ENCODE measurements at regions of chr12 and their contacts with region 1.

Region 1: GRCh38 chr12:108193917-108194316 is 64.8 kb downstream of the WSCD2 start:
- DNase-seq: peak in 1 of 2 donors; percentile 8
- ATAC-seq: no peak
- H3K4me3 ChIP-seq: no peak overlapping the region
- H3K27ac ChIP-seq: no peak overlapping the region
- H3K4me1 ChIP-seq: peaks cover 0 to 6% (median 0%) of the 10 kb centered on the region in 9 donors
- H3K27me3 ChIP-seq: no peaks in the 10 kb centered on the region
- CTCF ChIP-seq: peak; percentile 52 to 76 (median 70)

Region 2: DNA sequence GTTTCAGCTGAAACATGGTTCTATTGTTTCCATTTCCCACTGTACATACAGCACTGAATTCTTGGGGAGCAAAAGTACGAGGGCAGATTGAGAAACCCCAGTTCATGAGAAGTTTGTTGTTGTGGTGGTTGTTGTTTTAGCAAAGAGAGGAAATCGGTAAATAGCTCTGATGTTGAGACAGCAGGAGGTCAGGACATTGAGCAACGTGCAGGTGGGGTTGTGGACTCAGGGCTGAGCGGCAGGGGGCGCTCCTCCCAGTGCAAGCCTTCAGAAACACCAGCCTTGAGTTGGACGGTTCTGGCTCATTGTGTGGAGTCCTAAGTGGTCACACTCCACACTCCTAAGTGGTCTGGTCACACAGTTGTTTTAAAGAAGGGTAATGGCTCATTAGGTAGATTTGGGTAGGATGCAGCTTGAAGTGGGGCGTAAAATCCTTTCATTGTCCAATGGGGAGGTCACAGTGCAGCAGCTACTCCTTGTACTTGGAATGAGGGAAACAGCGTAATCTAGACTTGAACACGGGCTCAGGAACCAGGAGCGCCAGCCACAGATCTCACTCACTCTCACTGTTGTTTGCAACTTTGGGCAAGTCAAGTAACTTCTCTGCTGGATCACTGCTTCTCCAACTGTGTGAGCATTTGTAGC is 522.8 kb before region 1 on chr12:
- intact Hi-C with region 1: loop called in 2 of 10 experiments (anchors 10 kb)
- DNase-seq: no peak
- ATAC-seq: no peak
- H3K4me3 ChIP-seq: no peak overlapping the region
- H3K27ac ChIP-seq: no peak overlapping the region
- H3K4me1 ChIP-seq: no peaks in the 10 kb centered on the region
- H3K27me3 ChIP-seq: peaks cover 0 to 52% (median 36%) of the 10 kb centered on the region in 7 donors
- CTCF ChIP-seq: peak in 7 of 9 donors; percentile 40 to 72 (median 56)

Region 3: GRCh38 chr12:107917912-107918800 is 275.8 kb before region 1 on chr12:
- intact Hi-C with region 1: loop called in 4 of 10 experiments (anchors 5 kb)
- DNase-seq: no peak
- ATAC-seq: peak in 3 of 8 donors; percentile 44 to 55 (median 51)
- H3K4me3 ChIP-seq: no peak overlapping the region
- H3K27ac ChIP-seq: no peak overlapping the region
- H3K4me1 ChIP-seq: no peaks in the 10 kb centered on the region
- H3K27me3 ChIP-seq: peaks cover 9 to 82% (median 43%) of the 10 kb centered on the region in 7 donors
- CTCF ChIP-seq: peak; percentile 21 to 64 (median 55)

Region 4: DNA sequence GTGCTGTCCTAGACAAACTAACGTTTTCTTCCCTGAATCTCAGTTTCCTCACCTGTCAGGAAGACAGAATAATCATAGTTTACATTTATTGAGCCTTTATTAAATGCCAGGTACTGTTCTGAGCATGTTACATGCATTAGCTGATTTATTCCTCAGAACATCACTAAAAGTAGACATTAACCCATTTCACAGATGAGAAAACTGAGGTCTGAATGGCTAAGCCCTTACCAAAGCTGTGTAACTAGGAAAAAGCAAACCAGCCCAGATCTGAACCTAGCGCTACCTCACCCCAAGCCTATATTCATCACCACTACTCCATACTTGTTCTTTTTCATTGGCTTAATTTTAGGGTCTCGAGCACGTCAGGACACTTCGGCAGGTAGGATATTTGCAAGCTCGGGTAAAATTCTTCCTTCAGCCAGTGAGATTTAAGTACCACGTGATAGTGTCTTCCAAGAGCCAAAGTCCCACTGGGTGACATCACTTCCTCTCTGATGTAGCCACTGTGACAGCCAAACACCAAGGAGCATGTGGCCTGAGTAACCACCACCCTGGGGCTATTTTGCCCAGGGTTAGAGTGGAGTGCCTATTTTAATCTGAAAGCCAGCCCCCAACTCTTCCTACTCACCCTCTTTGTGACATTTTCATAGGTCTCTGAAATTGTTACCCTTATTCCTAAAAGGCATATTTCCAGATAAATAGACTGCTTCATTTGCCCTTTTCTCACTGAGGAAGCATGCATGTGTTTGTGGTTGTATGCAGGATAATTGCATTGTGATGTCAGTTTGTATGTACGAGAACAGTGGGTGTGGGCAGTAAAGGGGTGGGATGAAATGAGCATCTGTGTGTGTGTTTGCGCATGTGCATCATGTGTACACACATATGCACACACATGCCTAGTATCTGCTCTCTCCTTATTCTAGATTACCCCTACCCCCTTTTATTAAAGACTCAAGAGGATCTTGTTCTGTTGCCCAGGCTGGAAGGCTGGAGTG is 127.0 kb before region 1 on chr12:
- intact Hi-C with region 1: no loop called
- DNase-seq: no peak
- ATAC-seq: no peak
- H3K4me3 ChIP-seq: no peak overlapping the region
- H3K27ac ChIP-seq: no peak overlapping the region
- H3K4me1 ChIP-seq: no peaks in the 10 kb centered on the region
- H3K27me3 ChIP-seq: peaks cover 0 to 60% (median 14%) of the 10 kb centered on the region in 7 donors
- CTCF ChIP-seq: no peak

Region 5: DNA sequence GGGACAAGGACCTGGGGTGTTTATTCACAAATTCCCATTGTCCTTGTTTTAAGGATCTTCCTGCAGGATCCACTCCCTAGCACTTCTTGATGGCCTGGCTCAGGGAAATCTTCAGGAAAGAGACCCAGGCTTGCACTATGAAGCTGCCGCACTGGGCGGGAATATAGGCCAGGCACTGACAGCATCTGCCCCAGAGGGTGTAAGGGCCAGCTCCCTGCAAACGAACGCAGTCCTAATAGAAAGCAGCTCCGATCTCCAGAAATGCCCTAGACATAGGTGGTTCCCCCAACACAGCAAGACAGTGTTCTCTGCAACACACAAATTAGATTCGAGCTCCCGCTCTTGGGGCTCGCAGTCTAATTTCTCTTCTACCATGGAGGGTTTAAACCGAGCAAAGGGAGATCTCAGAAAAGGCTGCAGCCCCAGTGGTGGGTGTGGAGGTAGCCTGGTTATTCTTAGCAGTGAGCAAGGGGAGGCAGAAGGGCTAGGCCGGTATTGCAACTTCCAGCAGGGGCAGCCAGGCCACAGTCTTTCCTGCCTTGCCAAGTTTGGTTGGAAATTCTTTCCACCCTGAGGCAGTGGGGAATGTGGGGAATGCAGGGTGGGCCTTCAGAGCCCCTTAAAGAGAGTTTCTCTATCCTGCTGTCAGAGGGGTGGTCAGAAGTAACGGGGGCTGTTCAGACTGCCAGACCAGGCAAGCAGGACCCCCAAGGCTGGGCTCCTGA is 80.9 kb before region 1 on chr12:
- intact Hi-C with region 1: loop called in 1 of 10 experiments (anchors 5 kb)
- DNase-seq: no peak
- ATAC-seq: peak; percentile 55 to 85 (median 74)
- H3K4me3 ChIP-seq: no peak overlapping the region
- H3K27ac ChIP-seq: peak overlapping the region in 1 of 10 donors; percentile 13
- H3K4me1 ChIP-seq: peaks cover 0 to 11% (median 3%) of the 10 kb centered on the region in 9 donors
- H3K27me3 ChIP-seq: peaks cover 0 to 20% (median 0%) of the 10 kb centered on the region in 7 donors
- CTCF ChIP-seq: peak in 1 of 9 donors; percentile 19

Region 6: GRCh38 chr12:108133482-108133881 is 60.4 kb before region 1 on chr12:
- intact Hi-C with region 1: loop called in 5 of 10 experiments (anchors 2 to 5 kb)
- DNase-seq: peak in 1 of 2 donors; percentile 53
- ATAC-seq: peak in 6 of 8 donors; percentile 63 to 92 (median 81)
- H3K4me3 ChIP-seq: no peak overlapping the region
- H3K27ac ChIP-seq: no peak overlapping the region
- H3K4me1 ChIP-seq: peaks cover 0 to 13% (median 8%) of the 10 kb centered on the region in 9 donors
- H3K27me3 ChIP-seq: peaks cover 0 to 81% (median 30%) of the 10 kb centered on the region in 7 donors
- CTCF ChIP-seq: no peak